ENCODE measurements at regions of chr15 and their contacts with region 1.

Region 1: DNA sequence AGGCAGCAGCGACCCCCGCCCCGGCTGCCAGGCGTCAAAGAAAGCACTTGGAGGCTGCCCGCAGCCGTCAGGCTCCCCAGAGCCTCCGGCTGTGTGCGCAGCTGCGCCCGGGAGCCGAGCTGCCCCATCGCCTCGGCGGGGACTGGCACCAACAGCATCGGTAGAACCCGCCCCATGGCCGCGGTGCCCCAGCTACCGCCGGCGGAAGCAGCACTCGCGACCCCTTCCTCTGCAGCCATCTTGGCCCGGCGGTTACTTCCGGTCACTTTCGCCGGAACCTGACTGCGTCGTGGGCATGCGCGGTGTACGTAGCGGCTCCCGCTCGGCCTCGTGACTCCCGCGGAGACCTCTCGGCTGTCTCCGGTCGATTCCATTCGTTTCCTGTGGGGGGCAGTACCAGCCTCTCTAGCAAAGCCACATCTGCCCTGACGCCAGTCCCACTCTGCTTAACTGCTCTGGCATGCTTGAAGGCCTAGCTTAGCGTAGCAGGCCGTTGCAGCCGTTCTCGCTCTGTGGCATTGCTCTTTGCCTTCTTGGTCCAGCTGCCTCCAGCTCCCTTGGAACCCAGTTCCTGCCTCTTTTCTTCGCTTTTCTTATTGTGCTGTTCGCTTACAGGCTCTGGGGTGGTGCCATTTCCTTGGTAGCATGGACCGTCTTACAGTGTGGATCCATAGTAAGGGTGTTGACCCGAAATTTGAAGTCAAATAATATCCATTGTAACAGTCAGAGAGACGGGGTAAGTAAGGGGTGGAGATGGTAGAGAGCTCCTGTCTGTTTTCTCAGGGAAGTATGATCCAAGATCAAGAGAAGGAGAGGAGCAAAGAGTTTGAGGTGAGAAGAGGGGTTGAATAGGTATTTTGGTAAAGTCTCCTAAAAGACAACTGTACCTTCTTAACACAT is at the start of gene SPG11:
- DNase-seq: peak; percentile 88
- ATAC-seq: peak; percentile 83
- H3K4me3 Mint-ChIP-seq: peak within 1 kb of the TSS; percentile 98
- H3K27ac Mint-ChIP-seq: peak within 1 kb of the TSS; percentile 99
- H3K4me1 Mint-ChIP-seq: peaks cover 58% of the 10 kb centered on the region
- H3K27me3 Mint-ChIP-seq: no peaks in the 10 kb centered on the region
- CTCF ChIP-seq: no peak
- total RNA-seq, gene SPG11: 132 and 161 TPM in 2 replicates

Region 2: GRCh38 chr15:44519537-44519936 is 144.1 kb before region 1 on chr15:
- CTCF ChIA-PET with region 1: no interaction called
- POLR2A ChIA-PET with region 1: no interaction called
- intact Hi-C with region 1: no loop called
- DNase-seq: no peak
- ATAC-seq: no peak
- H3K4me3 Mint-ChIP-seq: no peak overlapping the region
- H3K27ac Mint-ChIP-seq: no peak overlapping the region
- H3K4me1 Mint-ChIP-seq: no peaks in the 10 kb centered on the region
- H3K27me3 Mint-ChIP-seq: no peaks in the 10 kb centered on the region
- CTCF ChIP-seq: no peak

Region 3: GRCh38 chr15:44593042-44593736 is 70.5 kb before region 1 on chr15:
- CTCF ChIA-PET with region 1: interaction called, 4 read pairs
- POLR2A ChIA-PET with region 1: interaction called, 4 read pairs
- intact Hi-C with region 1: loop called (anchors 2 kb)
- DNase-seq: no peak
- ATAC-seq: peak; percentile 62
- H3K4me3 Mint-ChIP-seq: no peak overlapping the region
- H3K27ac Mint-ChIP-seq: peak overlapping the region; percentile 63
- H3K4me1 Mint-ChIP-seq: peaks cover 11% of the 10 kb centered on the region
- H3K27me3 Mint-ChIP-seq: no peaks in the 10 kb centered on the region
- CTCF ChIP-seq: no peak

Region 4: DNA sequence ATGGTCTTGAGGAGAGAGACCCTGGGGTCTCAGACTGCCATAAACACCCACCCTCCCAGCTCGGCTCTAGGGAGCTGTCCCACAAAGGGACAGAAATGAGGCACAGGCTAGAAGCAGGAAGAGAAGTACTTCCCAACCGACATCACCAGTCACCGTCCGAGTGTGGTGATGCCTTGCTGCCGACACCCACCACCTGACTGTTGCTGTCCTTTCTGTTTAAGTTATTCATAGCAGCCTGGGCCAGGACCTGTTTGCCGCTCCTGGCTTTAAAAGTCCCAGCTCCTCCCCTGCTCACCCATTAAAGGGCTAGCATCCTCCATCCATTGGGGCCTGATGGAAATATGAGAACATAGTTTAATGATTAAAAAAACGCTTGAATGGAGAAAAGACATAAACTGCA is 13.0 kb after region 1 on chr15:
- CTCF ChIA-PET with region 1: interaction called, 16 read pairs
- POLR2A ChIA-PET with region 1: interaction called, 60 read pairs
- intact Hi-C with region 1: loop called (anchors 1 kb)
- DNase-seq: no peak
- ATAC-seq: peak; percentile 29
- H3K4me3 Mint-ChIP-seq: peak overlapping the region; percentile 32
- H3K27ac Mint-ChIP-seq: peak overlapping the region; percentile 83
- H3K4me1 Mint-ChIP-seq: peaks cover 78% of the 10 kb centered on the region
- H3K27me3 Mint-ChIP-seq: no peaks in the 10 kb centered on the region
- CTCF ChIP-seq: no peak

Region 5: DNA sequence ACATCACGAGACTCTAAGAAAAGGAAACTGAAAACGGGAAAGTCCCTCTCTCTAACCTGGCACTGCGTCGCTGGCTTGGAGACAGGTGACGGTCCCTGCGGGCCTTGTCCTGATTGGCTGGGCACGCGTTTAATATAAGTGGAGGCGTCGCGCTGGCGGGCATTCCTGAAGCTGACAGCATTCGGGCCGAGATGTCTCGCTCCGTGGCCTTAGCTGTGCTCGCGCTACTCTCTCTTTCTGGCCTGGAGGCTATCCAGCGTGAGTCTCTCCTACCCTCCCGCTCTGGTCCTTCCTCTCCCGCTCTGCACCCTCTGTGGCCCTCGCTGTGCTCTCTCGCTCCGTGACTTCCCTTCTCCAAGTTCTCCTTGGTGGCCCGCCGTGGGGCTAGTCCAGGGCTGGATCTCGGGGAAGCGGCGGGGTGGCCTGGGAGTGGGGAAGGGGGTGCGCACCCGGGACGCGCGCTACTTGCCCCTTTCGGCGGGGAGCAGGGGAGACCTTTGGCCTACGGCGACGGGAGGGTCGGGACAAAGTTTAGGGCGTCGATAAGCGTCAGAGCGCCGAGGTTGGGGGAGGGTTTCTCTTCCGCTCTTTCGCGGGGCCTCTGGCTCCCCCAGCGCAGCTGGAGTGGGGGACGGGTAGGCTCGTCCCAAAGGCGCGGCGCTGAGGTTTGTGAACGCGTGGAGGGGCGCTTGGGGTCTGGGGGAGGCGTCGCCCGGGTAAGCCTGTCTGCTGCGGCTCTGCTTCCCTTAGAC is 47.9 kb after region 1 on chr15 and contains the start of gene B2M:
- CTCF ChIA-PET with region 1: interaction called, 239 read pairs
- POLR2A ChIA-PET with region 1: interaction called, 1,048 read pairs
- intact Hi-C with region 1: loop called (anchors 1 kb)
- DNase-seq: peak; percentile 92
- ATAC-seq: peak; percentile 74
- H3K4me3 Mint-ChIP-seq: peak within 1 kb of the TSS; percentile 99
- H3K27ac Mint-ChIP-seq: peak within 1 kb of the TSS; percentile 100
- H3K4me1 Mint-ChIP-seq: peaks cover 53% of the 10 kb centered on the region
- H3K27me3 Mint-ChIP-seq: no peaks in the 10 kb centered on the region
- CTCF ChIP-seq: no peak
- total RNA-seq, gene B2M: 3,396 and 3,707 TPM in 2 replicates

Region 6: GRCh38 chr15:45037936-45038335 is 374.3 kb after region 1 on chr15:
- CTCF ChIA-PET with region 1: no interaction called
- POLR2A ChIA-PET with region 1: no interaction called
- intact Hi-C with region 1: loop called (anchors 5 kb)
- DNase-seq: no peak
- ATAC-seq: no peak
- H3K4me3 Mint-ChIP-seq: no peak overlapping the region
- H3K27ac Mint-ChIP-seq: peak overlapping the region; percentile 31
- H3K4me1 Mint-ChIP-seq: peaks cover 35% of the 10 kb centered on the region
- H3K27me3 Mint-ChIP-seq: no peaks in the 10 kb centered on the region
- CTCF ChIP-seq: no peak